MCF 10A (cell line): ENCODE measurements at regions of chr12 and their contacts with region 1.

Region 1: GRCh38 chr12:3135522-3136461 is 58.6 kb downstream of the TSPAN9 start:
- DNase-seq: peak; percentile 79
- H3K4me3 Mint-ChIP-seq: no peak overlapping the region
- H3K27ac Mint-ChIP-seq: no peak overlapping the region
- H3K4me1 Mint-ChIP-seq: peaks cover 5% of the 10 kb centered on the region
- H3K27me3 Mint-ChIP-seq: no peaks in the 10 kb centered on the region
- CTCF ChIP-seq: peak; percentile 87

Region 2: GRCh38 chr12:3122835-3123678 is 12.7 kb before region 1 on chr12:
- CTCF ChIA-PET with region 1: interaction called, 26 read pairs
- POLR2A ChIA-PET with region 1: interaction called, 7 read pairs
- intact Hi-C with region 1: no loop called
- DNase-seq: peak; percentile 89
- H3K4me3 Mint-ChIP-seq: no peak overlapping the region
- H3K27ac Mint-ChIP-seq: peak overlapping the region; percentile 33
- H3K4me1 Mint-ChIP-seq: peaks cover 33% of the 10 kb centered on the region
- H3K27me3 Mint-ChIP-seq: no peaks in the 10 kb centered on the region
- CTCF ChIP-seq: no peak

Region 3: GRCh38 chr12:3150931-3151835 is 15.4 kb after region 1 on chr12:
- CTCF ChIA-PET with region 1: interaction called, 30 read pairs
- POLR2A ChIA-PET with region 1: interaction called, 4 read pairs
- intact Hi-C with region 1: no loop called
- DNase-seq: no peak
- H3K4me3 Mint-ChIP-seq: no peak overlapping the region
- H3K27ac Mint-ChIP-seq: no peak overlapping the region
- H3K4me1 Mint-ChIP-seq: no peaks in the 10 kb centered on the region
- H3K27me3 Mint-ChIP-seq: no peaks in the 10 kb centered on the region
- CTCF ChIP-seq: no peak

Region 4: DNA sequence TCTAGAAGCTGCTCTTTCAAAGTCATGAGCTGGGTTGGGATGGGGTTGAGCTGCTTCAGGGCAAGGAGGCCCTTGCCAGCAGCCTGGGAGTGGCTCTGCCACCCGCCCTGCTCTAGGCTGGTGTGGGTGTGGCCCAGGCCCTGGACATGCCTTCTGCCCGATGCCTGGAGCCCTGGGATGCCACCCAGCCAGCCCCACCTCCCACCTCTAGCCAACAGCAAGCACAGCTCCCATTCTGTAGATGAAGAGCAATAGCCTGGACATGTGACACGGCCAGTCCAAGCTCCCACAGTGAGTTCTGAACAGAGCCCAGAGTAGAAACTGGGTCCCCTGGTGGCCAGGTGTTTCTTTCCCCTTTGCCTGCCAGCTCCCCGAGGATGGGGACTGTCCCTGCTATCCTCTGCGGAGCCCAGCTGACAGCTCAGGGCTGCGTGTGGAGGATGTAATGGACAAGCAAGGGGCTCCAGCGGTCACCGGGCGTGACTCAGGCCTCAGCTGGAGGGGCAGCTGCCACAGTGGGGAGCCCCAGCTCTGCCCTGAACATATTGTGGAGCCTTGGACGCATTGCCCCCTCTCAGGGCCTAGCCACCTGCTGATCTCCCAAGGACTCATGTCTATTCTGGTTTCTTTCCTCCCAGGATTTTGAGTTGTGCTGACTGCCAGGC is 106.5 kb after region 1 on chr12:
- CTCF ChIA-PET with region 1: interaction called, 14 read pairs
- POLR2A ChIA-PET with region 1: no interaction called
- intact Hi-C with region 1: no loop called
- DNase-seq: peak; percentile 14
- H3K4me3 Mint-ChIP-seq: no peak overlapping the region
- H3K27ac Mint-ChIP-seq: no peak overlapping the region
- H3K4me1 Mint-ChIP-seq: no peaks in the 10 kb centered on the region
- H3K27me3 Mint-ChIP-seq: no peaks in the 10 kb centered on the region
- CTCF ChIP-seq: no peak

Region 5: GRCh38 chr12:3275171-3276041 is 139.6 kb after region 1 on chr12:
- CTCF ChIA-PET with region 1: interaction called, 248 read pairs
- POLR2A ChIA-PET with region 1: no interaction called
- intact Hi-C with region 1: loop called (anchors 1 kb)
- DNase-seq: peak; percentile 68
- H3K4me3 Mint-ChIP-seq: no peak overlapping the region
- H3K27ac Mint-ChIP-seq: no peak overlapping the region
- H3K4me1 Mint-ChIP-seq: peaks cover 17% of the 10 kb centered on the region
- H3K27me3 Mint-ChIP-seq: no peaks in the 10 kb centered on the region
- CTCF ChIP-seq: peak; percentile 95

Region 6: DNA sequence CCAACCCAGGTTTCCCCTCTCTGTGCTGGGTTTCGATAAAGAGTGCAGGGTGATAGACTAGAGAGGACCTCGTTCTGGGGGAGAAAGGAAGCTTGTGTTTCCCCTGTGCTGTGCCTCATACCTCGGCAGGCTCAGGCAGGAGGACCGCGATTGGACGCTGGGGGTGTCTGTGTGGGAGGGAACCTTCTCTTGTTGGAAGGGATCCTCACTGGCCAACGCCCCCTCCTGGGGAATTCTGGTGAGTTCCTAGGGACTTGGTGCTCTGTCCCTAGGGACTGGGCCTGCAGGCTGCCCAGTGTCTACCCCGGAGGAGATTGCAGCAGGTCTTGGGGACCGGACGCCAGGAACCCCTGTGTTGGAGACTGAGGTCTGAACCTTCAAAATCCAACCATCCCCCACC is 197.8 kb after region 1 on chr12:
- CTCF ChIA-PET with region 1: no interaction called
- POLR2A ChIA-PET with region 1: no interaction called
- intact Hi-C with region 1: no loop called
- DNase-seq: peak; percentile 20
- H3K4me3 Mint-ChIP-seq: no peak overlapping the region
- H3K27ac Mint-ChIP-seq: no peak overlapping the region
- H3K4me1 Mint-ChIP-seq: no peaks in the 10 kb centered on the region
- H3K27me3 Mint-ChIP-seq: no peaks in the 10 kb centered on the region
- CTCF ChIP-seq: no peak

Region 7: GRCh38 chr12:3803865-3804472 is 668.2 kb after region 1 on chr12:
- CTCF ChIA-PET with region 1: interaction called, 6 read pairs
- POLR2A ChIA-PET with region 1: no interaction called
- intact Hi-C with region 1: loop called (anchors 5 kb)
- DNase-seq: peak; percentile 68
- H3K4me3 Mint-ChIP-seq: no peak overlapping the region
- H3K27ac Mint-ChIP-seq: no peak overlapping the region
- H3K4me1 Mint-ChIP-seq: no peaks in the 10 kb centered on the region
- H3K27me3 Mint-ChIP-seq: no peaks in the 10 kb centered on the region
- CTCF ChIP-seq: peak; percentile 71